A673 (cell line): ENCODE measurements at regions of chr22 and their contacts with region 1.

Region 1: GRCh38 chr22:21074188-21074724 is 28.5 kb downstream of the LRRC74B start:
- DNase-seq: no peak
- H3K4me3 ChIP-seq: no peak overlapping the region
- H3K27ac ChIP-seq: no peak overlapping the region
- H3K4me1 ChIP-seq: no peaks in the 10 kb centered on the region
- H3K27me3 ChIP-seq: no peaks in the 10 kb centered on the region
- CTCF ChIP-seq: no peak

Region 2: DNA sequence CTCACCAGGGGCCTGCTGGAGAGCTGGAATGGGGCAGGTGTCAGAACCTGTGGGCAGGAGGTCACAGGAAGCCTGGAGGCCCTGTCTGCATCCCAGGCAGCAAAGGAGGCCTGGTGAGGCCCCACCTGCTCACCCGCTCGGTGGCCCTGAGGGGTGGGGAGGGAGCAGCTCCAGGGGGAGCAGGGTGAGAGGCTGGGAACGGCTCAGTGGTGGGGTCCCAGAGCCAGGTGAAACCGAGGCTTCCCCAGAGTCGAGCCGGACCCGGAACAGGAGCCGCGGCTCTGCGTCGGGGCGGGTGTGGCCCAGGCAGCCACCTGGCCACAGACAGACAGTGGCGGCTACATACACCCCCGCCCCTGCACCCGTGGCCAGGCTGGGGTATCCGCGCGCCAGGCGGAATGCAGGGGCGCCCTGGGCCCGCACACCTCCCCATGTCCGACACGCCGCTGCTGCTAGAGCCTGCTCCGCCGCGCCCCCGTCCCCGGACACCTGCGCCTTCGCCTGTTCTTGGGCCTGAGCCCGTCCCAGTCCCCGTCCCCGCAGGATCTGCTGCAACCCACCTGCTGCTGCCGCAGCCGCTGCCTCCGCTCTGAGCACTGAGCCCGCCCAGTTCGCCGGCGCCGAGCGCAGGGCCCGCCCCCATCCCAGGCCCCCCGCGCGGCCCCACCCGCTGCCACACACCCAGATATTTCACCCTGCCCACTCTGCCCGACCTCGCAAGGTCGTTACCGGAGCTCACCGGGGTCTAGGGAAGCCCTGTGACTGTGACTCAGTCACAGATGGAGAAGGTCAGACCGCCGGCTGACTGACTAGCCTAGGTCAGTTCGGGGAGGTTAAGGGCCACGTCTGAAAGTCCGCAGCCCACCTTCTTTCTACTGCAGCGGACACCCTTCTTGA is 42.0 kb before region 1 on chr22 and contains the start of gene SLC7A4:
- CTCF ChIA-PET with region 1: no interaction called
- POLR2A ChIA-PET with region 1: no interaction called
- intact Hi-C with region 1: loop called (anchors 5 kb)
- DNase-seq: no peak
- H3K4me3 ChIP-seq: peak within 1 kb of the TSS; percentile 25
- H3K27ac ChIP-seq: no peak within 1 kb of the TSS
- H3K4me1 ChIP-seq: no peaks in the 10 kb centered on the region
- H3K27me3 ChIP-seq: peaks cover 18% of the 10 kb centered on the region
- CTCF ChIP-seq: no peak
- total RNA-seq, gene SLC7A4: not detected in 2 replicates